GM10248 (cell line): ENCODE measurements at regions of chr1 and their contacts with region 1.

Region 1: DNA sequence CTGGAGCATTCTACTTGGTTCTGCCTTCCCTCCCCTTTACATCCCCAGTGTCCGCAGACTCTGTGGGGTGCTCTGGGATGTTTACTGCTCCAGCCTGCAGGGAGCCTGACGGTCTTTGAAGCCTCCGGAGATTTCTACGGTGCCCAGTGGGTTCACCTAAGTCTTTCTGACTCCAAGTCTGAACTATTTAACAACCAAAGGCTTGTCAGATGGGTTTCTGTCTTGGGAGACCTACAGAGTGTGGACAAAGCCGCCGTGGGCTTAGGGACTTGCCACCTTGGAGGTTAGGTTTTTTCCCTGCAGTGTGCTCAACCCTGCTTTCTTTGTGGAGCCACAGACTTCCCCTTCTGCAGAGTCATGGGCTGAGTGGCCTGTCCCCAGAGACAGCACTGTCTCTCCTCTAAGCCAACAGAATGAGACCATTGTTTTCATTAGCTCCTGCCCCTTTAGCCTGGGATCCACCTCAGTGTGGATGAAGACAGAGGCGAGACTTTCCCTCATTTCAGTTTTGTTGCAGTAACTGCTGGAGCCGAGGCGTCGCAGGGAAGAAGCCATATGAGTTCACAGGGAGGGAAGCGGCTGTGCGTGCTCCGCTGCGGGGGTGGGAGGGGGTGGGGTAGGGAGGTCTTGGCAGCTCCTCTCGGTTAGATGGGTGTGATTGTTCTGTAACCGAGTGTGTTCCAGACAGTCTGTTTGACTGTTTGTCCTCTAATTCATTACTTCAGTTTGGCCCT is 120.7 kb downstream of the CNIH3 start:
- DNase-seq: peak; percentile 70
- CTCF ChIP-seq: no peak

Region 2: GRCh38 chr1:224700915-224701531 is 35.8 kb before region 1 on chr1:
- CTCF ChIA-PET with region 1: interaction called, 23 read pairs
- POLR2A ChIA-PET with region 1: no interaction called
- DNase-seq: peak; percentile 53
- CTCF ChIP-seq: peak; percentile 30

Region 3: GRCh38 chr1:224747578-224747977 is 10.8 kb after region 1 on chr1:
- CTCF ChIA-PET with region 1: interaction called, 16 read pairs
- POLR2A ChIA-PET with region 1: no interaction called
- DNase-seq: peak; percentile 49
- CTCF ChIP-seq: no peak